Esophagus muscularis mucosa (tissue), 4 donors: ENCODE measurements at regions of chr4 and their contacts with region 1.

Region 1: GRCh38 chr4:109729718-109730618 is at the start of gene PLA2G12A:
- DNase-seq: no peak
- H3K4me3 ChIP-seq: peak within 1 kb of the TSS; percentile 78 to 93 (median 88)
- H3K27ac ChIP-seq: peak within 1 kb of the TSS; percentile 76 to 80 (median 78)
- H3K4me1 ChIP-seq: peaks cover 13 to 20% (median 15%) of the 10 kb centered on the region in 4 donors
- H3K27me3 ChIP-seq: no peaks in the 10 kb centered on the region
- CTCF ChIP-seq: no peak
- EP300 ChIP-seq: no peak
- POLR2A ChIP-seq: no peak
- total RNA-seq, gene PLA2G12A: 18.8 to 24.5 (median 23.4) TPM

Region 2: DNA sequence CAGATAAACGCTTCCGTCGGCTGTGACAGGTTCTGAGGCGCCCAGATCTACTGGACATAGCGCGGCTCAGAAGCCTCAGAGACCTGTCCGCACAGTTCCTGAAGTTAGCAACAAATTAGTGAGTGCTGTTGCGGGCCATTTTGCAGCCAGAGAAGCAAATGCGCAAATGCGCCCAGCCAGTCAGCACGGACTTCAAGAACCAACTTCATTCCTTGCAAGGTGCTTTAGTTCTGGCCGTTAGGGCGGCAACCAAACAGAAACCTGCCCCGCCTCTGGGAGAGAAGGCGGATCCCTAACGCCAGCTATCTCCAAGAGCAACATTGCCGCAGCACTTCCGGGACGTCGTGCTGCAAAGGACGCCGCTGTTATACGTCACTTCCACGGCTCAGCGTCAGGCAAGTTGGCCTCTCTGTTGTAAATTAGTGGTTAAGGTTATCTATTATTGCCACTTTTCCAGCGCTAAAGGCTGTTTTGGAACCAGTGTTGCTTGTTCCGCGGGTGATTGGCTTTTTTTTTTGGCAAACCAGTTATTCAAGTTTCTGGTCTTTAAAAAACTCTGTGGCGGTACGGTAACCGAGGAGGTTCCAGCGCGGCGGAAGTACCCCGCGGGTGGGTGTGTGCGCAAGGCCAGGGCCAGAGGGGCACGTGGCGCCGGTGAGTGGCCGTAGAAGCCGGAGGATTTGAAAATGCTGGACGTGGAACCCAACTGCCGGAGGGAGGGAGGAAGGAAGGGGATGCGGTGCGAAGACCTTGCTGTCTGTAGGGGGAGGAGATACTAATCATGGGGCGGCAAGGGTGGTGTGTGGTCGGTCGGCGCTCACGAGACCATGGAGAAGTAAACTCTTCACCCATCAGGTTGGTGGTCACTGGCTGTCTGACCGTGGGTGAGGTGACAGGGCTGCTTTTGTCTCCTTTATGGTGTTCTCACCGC is 85.4 kb after region 1 on chr4 and contains the start of gene GAR1:
- intact Hi-C with region 1: loop called (anchors 2 kb)
- DNase-seq: peak; percentile 98
- H3K4me3 ChIP-seq: peak within 1 kb of the TSS; percentile 73 to 89 (median 83)
- H3K27ac ChIP-seq: peak within 1 kb of the TSS; percentile 82 to 90 (median 85)
- H3K4me1 ChIP-seq: peaks cover 7 to 25% (median 17%) of the 10 kb centered on the region in 4 donors
- H3K27me3 ChIP-seq: no peaks in the 10 kb centered on the region
- CTCF ChIP-seq: no peak
- EP300 ChIP-seq: no peak
- POLR2A ChIP-seq: no peak
- total RNA-seq, gene GAR1: 6.2 to 9.1 (median 7.7) TPM